Heart left ventricle (tissue), 16 donors: ENCODE measurements at regions of chr17 and their contacts with region 1.

Region 1: DNA sequence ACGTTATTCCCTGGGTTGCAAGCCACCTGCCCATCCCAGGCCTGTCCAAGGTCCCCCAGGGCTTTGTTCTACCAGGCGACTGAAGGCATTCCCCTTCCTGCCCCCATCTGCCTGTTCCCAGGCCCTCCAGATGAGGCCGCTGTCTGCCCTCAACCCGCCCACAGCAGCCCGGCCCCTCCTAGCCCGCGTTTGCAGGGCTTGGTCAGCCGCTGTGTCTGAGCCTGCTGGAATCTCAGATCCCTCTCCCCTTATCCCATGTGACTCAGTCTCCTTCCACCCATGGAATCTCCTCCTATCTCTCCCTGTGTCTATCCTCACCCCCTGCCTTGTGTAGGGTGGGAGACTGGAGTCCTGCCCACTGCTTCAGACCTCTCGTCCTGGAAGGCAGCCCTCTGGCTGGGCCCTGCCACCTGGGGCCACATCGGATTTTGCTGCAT is 186.0 kb upstream of the TNRC6C start:
- DNase-seq: peak; percentile 74 to 87 (median 81)
- ATAC-seq: peak; percentile 80 to 93 (median 86)
- H3K4me3 ChIP-seq: no peak overlapping the region
- H3K27ac ChIP-seq: peak overlapping the region in 3 of 12 donors; percentile 3 to 51 (median 4)
- H3K4me1 ChIP-seq: peaks cover 0 to 14% (median 8%) of the 10 kb centered on the region in 12 donors
- H3K27me3 ChIP-seq: no peaks in the 10 kb centered on the region
- CTCF ChIP-seq: peak; percentile 67 to 84 (median 76)
- POLR2A ChIP-seq: no peak

Region 2: DNA sequence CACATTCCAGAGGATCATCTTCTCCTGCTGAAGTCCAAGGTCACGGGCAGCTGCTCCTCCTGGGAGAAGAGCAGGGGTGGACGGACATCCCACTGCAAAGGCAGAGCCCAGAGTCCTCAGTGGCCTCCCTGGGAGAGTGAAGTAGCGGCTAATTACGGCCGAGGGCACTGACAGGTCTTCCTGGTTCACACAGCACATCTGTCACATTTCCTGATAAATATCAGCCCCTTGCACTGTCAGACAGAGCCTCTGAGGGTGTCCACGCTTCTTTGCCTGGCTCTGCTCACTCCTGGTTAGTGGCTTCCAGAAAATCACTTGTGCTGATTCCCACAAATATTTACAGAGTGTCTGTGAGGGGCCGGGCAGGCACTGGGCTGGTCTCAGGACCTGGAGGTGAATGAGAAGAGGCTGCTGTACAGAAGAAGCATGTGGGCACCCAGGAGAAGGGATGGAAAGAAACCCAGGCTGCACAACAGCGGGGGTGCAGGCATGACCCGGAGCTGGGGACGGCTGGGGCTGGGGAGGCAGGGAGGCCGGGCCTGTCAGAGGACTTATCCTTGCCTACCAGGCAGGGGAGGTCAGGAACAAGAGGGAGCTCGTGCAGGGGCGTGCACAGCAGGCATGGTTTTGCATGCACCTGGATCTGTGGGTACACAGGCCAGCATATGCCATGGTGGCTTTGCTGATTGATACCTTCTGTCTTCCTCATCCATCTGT is 72.2 kb before region 1 on chr17:
- intact Hi-C with region 1: loop called in 1 of 10 experiments (anchors 10 kb)
- DNase-seq: no peak
- ATAC-seq: no peak
- H3K4me3 ChIP-seq: no peak overlapping the region
- H3K27ac ChIP-seq: no peak overlapping the region
- H3K4me1 ChIP-seq: peaks cover 0 to 11% (median 0%) of the 10 kb centered on the region in 12 donors
- H3K27me3 ChIP-seq: peaks cover 0 to 11% (median 0%) of the 10 kb centered on the region in 9 donors
- CTCF ChIP-seq: no peak
- POLR2A ChIP-seq: no peak

Region 3: DNA sequence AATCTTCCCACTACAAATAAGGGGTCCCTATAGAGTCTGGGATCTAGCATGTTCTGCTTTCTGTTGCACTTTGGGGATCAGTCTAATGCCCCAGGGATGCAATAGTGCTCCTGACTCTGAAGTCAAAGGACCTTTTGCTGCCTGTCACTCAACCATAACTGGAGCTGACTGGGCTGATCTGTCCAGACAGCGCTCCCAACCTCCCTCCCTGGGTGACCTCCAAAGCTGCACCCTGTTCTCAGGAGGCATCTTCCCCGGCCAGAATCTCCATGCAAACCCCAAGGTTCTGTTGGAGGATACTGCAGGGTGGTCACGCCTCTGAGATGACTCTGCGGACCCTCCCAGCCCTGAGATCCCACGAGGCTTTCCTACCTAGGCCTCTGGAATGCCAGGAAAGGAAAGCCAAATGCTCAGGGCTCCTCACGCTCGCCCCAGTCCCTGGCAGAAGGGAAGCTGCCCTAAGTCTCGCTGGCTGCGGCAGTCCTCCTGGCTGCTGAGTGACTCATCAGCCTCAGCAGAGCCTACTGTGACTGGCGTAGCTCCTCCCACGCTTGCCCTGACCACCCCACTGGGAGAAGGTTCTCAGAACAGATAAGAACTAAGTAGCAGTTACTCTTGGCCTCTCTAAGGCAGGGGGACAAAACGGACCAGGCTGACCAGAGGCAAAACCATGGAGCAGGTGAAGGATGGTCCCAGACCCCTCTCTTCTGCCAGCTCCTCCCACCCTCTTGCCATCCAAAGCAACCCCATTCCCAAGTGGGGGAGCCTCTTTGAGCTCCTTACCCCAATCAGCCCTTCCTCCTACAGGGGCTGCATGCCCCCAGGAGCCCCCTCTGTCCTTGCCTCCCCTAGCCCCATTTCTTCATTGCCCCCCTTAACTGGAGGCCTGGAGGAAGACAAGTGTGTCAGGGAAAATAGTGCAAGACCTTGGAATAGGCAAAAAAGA is 62.0 kb after region 1 on chr17:
- intact Hi-C with region 1: loop called in 2 of 10 experiments (anchors 10 kb)
- DNase-seq: peak; percentile 52 to 84 (median 82)
- ATAC-seq: peak in 3 of 4 donors; percentile 42 to 77 (median 68)
- H3K4me3 ChIP-seq: peak overlapping the region in 1 of 12 donors; percentile 24
- H3K27ac ChIP-seq: peak overlapping the region in 9 of 12 donors; percentile 8 to 70 (median 44)
- H3K4me1 ChIP-seq: peaks cover 13 to 69% (median 48%) of the 10 kb centered on the region in 12 donors
- H3K27me3 ChIP-seq: no peaks in the 10 kb centered on the region
- CTCF ChIP-seq: no peak
- POLR2A ChIP-seq: no peak

Region 4: GRCh38 chr17:77881545-77881944 is 109.1 kb after region 1 on chr17:
- intact Hi-C with region 1: loop called in 5 of 10 experiments (anchors 2 to 10 kb)
- DNase-seq: peak; percentile 86 to 95 (median 94)
- ATAC-seq: peak; percentile 70 to 94 (median 94)
- H3K4me3 ChIP-seq: peak overlapping the region in 1 of 12 donors; percentile 28
- H3K27ac ChIP-seq: peak overlapping the region in 11 of 12 donors; percentile 26 to 91 (median 68)
- H3K4me1 ChIP-seq: peaks cover 15 to 49% (median 34%) of the 10 kb centered on the region in 12 donors
- H3K27me3 ChIP-seq: no peaks in the 10 kb centered on the region
- CTCF ChIP-seq: no peak
- POLR2A ChIP-seq: no peak

Region 5: DNA sequence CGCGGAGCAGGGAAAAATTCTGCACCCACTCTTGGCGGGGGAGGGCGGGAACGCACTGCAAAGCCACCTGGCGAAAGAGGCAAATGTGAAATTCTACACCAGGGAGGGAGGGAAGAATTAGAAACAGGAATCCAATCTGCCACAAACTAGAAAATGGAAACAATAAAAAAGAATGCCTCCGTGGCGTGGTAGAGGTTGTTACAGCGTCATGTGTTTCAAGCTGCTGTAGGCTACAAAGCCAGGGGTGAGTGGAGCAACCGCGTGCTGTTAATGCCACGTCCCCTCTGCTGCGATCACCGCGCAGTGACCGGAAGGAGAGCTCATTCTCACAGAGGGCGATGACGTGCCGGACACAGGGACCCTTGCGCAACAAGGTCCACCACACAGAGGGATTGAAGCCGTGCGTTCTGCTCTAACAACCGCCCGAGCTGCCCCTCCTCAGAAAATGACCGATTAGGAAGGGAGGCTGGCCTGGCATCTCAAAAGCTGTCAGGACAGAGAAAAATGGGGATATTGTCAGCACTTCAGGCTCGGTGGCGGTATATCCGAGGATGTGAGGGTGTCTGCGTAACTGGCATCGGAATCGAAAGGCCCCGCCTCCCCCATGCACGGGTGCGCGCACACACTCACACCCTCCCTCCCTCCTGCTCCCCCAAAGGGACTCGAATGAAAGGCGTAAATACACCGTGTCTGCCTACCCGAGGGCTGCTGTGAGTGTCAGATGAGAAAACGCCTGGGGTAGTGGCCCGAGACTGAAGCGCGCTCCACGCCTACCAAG is 115.2 kb after region 1 on chr17:
- intact Hi-C with region 1: loop called in 5 of 10 experiments (anchors 2 to 10 kb)
- DNase-seq: peak; percentile 80 to 91 (median 91)
- ATAC-seq: peak; percentile 71 to 92 (median 90)
- H3K4me3 ChIP-seq: peak overlapping the region; percentile 3 to 65 (median 56)
- H3K27ac ChIP-seq: peak overlapping the region; percentile 18 to 79 (median 65)
- H3K4me1 ChIP-seq: peaks cover 0 to 36% (median 20%) of the 10 kb centered on the region in 12 donors
- H3K27me3 ChIP-seq: no peaks in the 10 kb centered on the region
- CTCF ChIP-seq: no peak
- POLR2A ChIP-seq: peak in 1 of 2 donors; percentile 40

Region 6: DNA sequence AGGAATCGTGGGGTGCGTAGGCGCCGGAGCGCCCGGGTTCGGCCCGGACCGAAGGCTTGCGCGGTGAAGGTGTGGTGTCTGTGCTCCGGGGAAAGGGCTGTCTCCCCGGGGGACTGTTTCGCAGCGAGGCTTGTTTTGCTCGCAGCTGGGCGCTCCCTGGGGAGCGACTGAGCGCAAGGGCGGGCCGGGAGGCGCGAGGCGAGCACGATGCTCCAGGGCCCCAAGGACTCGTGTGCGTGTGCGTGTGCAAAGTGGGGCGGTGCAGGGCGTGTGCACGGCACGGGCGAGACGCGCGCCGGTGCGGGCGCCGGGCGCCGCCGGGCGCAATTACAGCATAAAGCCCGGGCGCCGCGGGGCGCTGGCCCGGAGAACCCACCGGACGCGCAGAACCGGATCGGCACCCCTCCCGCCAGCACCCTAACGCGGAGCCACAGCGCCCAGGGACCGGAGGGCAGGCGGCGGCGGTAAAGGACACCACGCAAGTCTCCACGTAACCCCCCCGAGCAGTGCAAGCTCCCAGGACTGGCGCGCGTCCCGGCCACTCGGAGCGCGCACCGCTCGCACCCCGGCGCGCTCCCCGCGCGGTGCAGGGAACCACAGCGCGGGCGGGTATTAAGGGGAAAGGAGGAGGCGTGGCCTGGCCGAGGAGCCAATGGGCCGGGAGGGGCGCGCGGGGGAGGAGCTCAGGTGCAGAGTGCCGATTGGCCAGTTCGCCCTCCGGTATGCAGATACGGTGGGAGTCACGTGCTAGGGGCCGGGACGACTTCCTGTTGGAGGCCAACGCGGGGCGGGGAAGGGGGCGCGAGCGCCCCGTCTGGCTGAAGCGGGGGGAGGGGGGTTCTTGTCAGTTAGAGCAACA is 185.6 kb after region 1 on chr17 and contains the start of gene TNRC6C:
- intact Hi-C with region 1: loop called in 5 of 10 experiments (anchors 2 to 10 kb)
- DNase-seq: peak; percentile 100
- ATAC-seq: peak; percentile 97 to 99 (median 98)
- H3K4me3 ChIP-seq: peak within 1 kb of the TSS; percentile 67 to 95 (median 79)
- H3K27ac ChIP-seq: peak within 1 kb of the TSS; percentile 71 to 96 (median 85)
- H3K4me1 ChIP-seq: peaks cover 6 to 50% (median 31%) of the 10 kb centered on the region in 12 donors
- H3K27me3 ChIP-seq: peaks cover 0 to 16% (median 0%) of the 10 kb centered on the region in 9 donors
- CTCF ChIP-seq: peak in 4 of 12 donors; percentile 24 to 36 (median 34)
- POLR2A ChIP-seq: peak; percentile 100
- total RNA-seq, gene TNRC6C: 11.1 to 24.7 (median 21.4) TPM

Region 7: GRCh38 chr17:78013683-78014467 is 241.4 kb after region 1 on chr17:
- intact Hi-C with region 1: loop called (anchors 1 to 5 kb)
- DNase-seq: peak in 3 of 5 donors; percentile 35 to 54 (median 35)
- ATAC-seq: peak; percentile 18 to 66 (median 56)
- H3K4me3 ChIP-seq: no peak overlapping the region
- H3K27ac ChIP-seq: peak overlapping the region in 1 of 12 donors; percentile 6
- H3K4me1 ChIP-seq: peaks cover 0 to 19% (median 6%) of the 10 kb centered on the region in 12 donors
- H3K27me3 ChIP-seq: no peaks in the 10 kb centered on the region
- CTCF ChIP-seq: peak; percentile 32 to 91 (median 77)
- POLR2A ChIP-seq: no peak

Region 8: GRCh38 chr17:78140169-78140976 is 367.9 kb after region 1 on chr17:
- intact Hi-C with region 1: no loop called
- DNase-seq: peak; percentile 83 to 96 (median 91)
- ATAC-seq: peak; percentile 80 to 89 (median 87)
- H3K4me3 ChIP-seq: peak overlapping the region in 2 of 12 donors; percentile 5 to 11
- H3K27ac ChIP-seq: peak overlapping the region in 1 of 12 donors; percentile 37
- H3K4me1 ChIP-seq: peaks cover 11 to 66% (median 20%) of the 10 kb centered on the region in 12 donors
- H3K27me3 ChIP-seq: no peaks in the 10 kb centered on the region
- CTCF ChIP-seq: no peak
- POLR2A ChIP-seq: peak in 1 of 2 donors; percentile 27